Naive thymus-derived CD4-positive, alpha-beta T cell (primary cell): ENCODE measurements at regions of chr16 and their contacts with region 1.

Region 1: GRCh38 chr16:30065143-30065850 is at the start of gene ALDOA:
- DNase-seq: peak; percentile 82 to 97 (median 92)
- ATAC-seq: peak; percentile 90
- H3K4me3 ChIP-seq: peak within 1 kb of the TSS; percentile 94
- H3K4me3 Mint-ChIP-seq: peak within 1 kb of the TSS; percentile 96 to 100 (median 99)
- H3K27ac ChIP-seq: peak within 1 kb of the TSS; percentile 83
- H3K27ac Mint-ChIP-seq: peak within 1 kb of the TSS; percentile 90 to 99 (median 98)
- H3K4me1 ChIP-seq: peaks cover 13 to 37% of the 10 kb centered on the region in 2 donors
- H3K4me1 Mint-ChIP-seq: peaks cover 22 to 43% (median 35%) of the 10 kb centered on the region in 7 donors
- H3K27me3 ChIP-seq: no peaks in the 10 kb centered on the region
- H3K27me3 Mint-ChIP-seq: no peaks in the 10 kb centered on the region
- total RNA-seq, gene ALDOA: 356 to 1,619 (median 584) TPM

Region 2: DNA sequence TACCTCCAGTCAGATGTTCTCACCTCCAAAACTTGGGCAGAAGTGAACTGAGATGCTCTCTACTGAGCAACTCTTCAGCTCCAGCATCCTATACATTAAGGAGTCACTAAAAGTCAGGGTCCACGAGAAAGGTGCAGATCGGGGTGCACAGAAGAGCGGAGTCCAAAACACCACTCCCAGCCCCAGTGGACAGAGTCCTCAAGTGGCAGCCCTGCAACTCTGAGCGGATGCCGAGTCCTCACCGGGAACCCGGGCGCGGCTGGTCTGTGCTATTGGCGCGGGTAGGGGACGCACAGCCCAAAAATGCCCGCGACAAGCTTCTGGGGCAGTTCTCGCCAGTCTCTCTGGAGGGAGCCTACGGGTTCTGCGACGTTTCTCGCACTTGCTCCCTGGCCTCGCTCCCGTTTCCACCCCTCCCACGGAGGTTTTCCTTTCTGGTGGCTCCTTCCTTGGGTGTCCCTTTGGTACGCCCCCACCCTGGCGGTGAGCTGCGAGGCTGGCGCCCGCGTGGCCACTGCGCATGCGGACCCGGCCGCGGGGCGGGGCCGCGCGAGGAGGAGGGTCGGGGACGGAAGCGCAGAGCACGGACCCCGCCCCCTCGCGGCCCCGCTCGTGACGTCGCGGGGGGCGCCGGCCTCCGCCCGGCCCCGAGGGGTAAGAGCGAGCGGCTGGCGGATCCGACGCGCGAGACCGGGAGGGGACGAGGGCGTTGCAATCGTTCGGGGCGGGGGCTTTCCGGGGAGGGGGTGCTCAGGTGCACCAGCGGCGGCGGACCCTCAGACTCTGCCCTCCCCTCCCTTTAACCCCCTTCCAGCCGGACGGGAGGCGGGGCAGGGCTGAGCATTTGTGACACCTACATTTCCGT is 103.6 kb before region 1 on chr16 and contains the start of gene TMEM219:
- CTCF ChIA-PET with region 1: no interaction called
- POLR2A ChIA-PET with region 1: interaction called, 3 read pairs
- intact Hi-C with region 1: loop called in 1 of 2 experiments (anchors 2 kb)
- DNase-seq: peak; percentile 90 to 99 (median 96)
- ATAC-seq: peak; percentile 94
- H3K4me3 ChIP-seq: peak within 1 kb of the TSS; percentile 91
- H3K4me3 Mint-ChIP-seq: peak within 1 kb of the TSS; percentile 88 to 94 (median 92)
- H3K27ac ChIP-seq: peak within 1 kb of the TSS; percentile 85
- H3K27ac Mint-ChIP-seq: peak within 1 kb of the TSS; percentile 88 to 97 (median 95)
- H3K4me1 ChIP-seq: peaks cover 10 to 17% of the 10 kb centered on the region in 2 donors
- H3K4me1 Mint-ChIP-seq: peaks cover 8 to 31% (median 23%) of the 10 kb centered on the region in 7 donors
- H3K27me3 ChIP-seq: no peaks in the 10 kb centered on the region
- H3K27me3 Mint-ChIP-seq: no peaks in the 10 kb centered on the region
- total RNA-seq, gene TMEM219: 64.3 to 89.7 (median 74.0) TPM

Region 3: DNA sequence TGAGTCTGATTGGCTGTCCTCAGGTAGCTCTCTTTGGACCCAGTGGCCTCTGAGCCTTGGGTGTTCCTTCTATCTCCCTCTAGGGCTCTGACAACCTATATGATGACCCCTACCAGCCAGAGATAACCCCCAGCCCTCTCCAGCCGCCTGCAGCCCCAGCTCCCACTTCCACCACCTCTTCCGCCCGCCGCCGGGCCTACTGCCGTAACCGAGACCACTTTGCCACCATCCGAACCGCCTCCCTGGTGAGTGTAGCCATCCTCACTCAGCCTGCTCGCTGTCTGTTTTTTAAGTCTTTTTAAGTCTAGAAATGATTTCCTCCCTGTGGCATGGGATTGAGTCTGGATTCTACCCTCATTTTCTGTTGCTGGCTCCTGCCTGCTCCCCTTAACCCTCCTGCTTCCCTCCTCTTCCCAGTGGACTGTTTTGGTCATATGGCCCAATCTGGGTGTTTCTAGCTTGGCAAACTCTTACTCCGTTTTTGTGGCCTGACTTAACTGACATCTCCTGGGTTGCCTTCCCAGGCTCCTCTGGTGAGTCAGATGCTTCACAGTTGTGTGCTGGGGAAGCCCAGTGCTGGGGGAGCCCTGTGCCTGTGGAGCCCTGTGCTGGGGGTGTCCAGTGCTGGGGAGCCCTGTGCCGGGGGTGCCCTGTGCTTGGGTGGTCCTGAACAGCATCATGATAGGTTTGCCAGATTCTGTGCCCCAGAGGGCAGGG is 81.7 kb before region 1 on chr16:
- CTCF ChIA-PET with region 1: no interaction called
- POLR2A ChIA-PET with region 1: no interaction called
- intact Hi-C with region 1: no loop called
- DNase-seq: no peak
- ATAC-seq: no peak
- H3K4me3 ChIP-seq: no peak overlapping the region
- H3K4me3 Mint-ChIP-seq: no peak overlapping the region
- H3K27ac ChIP-seq: no peak overlapping the region
- H3K27ac Mint-ChIP-seq: peak overlapping the region in 2 of 9 donors; percentile 33 to 61
- H3K4me1 ChIP-seq: no peaks in the 10 kb centered on the region
- H3K4me1 Mint-ChIP-seq: peaks cover 0 to 4% (median 0%) of the 10 kb centered on the region in 7 donors
- H3K27me3 ChIP-seq: no peaks in the 10 kb centered on the region
- H3K27me3 Mint-ChIP-seq: no peaks in the 10 kb centered on the region

Region 4: GRCh38 chr16:30075507-30076275 is 10.4 kb after region 1 on chr16 and contains the start of gene PPP4C:
- CTCF ChIA-PET with region 1: interaction called, 3 read pairs
- POLR2A ChIA-PET with region 1: interaction called, 83 read pairs
- intact Hi-C with region 1: loop called (anchors 1 kb)
- DNase-seq: peak; percentile 82 to 92 (median 89)
- ATAC-seq: peak; percentile 94
- H3K4me3 ChIP-seq: peak within 1 kb of the TSS; percentile 75
- H3K4me3 Mint-ChIP-seq: peak within 1 kb of the TSS; percentile 90 to 99 (median 95)
- H3K27ac ChIP-seq: peak within 1 kb of the TSS; percentile 85
- H3K27ac Mint-ChIP-seq: peak within 1 kb of the TSS; percentile 92 to 98 (median 96)
- H3K4me1 ChIP-seq: peaks cover 20 to 21% of the 10 kb centered on the region in 2 donors
- H3K4me1 Mint-ChIP-seq: peaks cover 23 to 59% (median 41%) of the 10 kb centered on the region in 7 donors
- H3K27me3 ChIP-seq: no peaks in the 10 kb centered on the region
- H3K27me3 Mint-ChIP-seq: peaks cover 0 to 2% (median 0%) of the 10 kb centered on the region in 5 donors
- total RNA-seq, gene PPP4C: 68.4 to 143 (median 86.0) TPM

Region 5: GRCh38 chr16:30122604-30123160 is 57.4 kb after region 1 on chr16:
- CTCF ChIA-PET with region 1: no interaction called
- POLR2A ChIA-PET with region 1: interaction called, 3 read pairs
- intact Hi-C with region 1: loop called (anchors 2 kb)
- DNase-seq: peak in 2 of 9 donors; percentile 19 to 35
- ATAC-seq: peak; percentile 2
- H3K4me3 ChIP-seq: peak overlapping the region; percentile 68
- H3K4me3 Mint-ChIP-seq: peak overlapping the region; percentile 82 to 94 (median 88)
- H3K27ac ChIP-seq: peak overlapping the region; percentile 89
- H3K27ac Mint-ChIP-seq: peak overlapping the region; percentile 75 to 93 (median 85)
- H3K4me1 ChIP-seq: peaks cover 6 to 13% of the 10 kb centered on the region in 2 donors
- H3K4me1 Mint-ChIP-seq: peaks cover 20 to 39% (median 27%) of the 10 kb centered on the region in 7 donors
- H3K27me3 ChIP-seq: no peaks in the 10 kb centered on the region
- H3K27me3 Mint-ChIP-seq: no peaks in the 10 kb centered on the region

Region 6: GRCh38 chr16:30355144-30355894 is 290.0 kb after region 1 on chr16 and contains the start of gene CD2BP2:
- CTCF ChIA-PET with region 1: no interaction called
- POLR2A ChIA-PET with region 1: interaction called, 12 read pairs
- intact Hi-C with region 1: no loop called
- DNase-seq: peak; percentile 75 to 91 (median 86)
- ATAC-seq: peak; percentile 92
- H3K4me3 ChIP-seq: peak within 1 kb of the TSS; percentile 82
- H3K4me3 Mint-ChIP-seq: peak within 1 kb of the TSS; percentile 90 to 100 (median 96)
- H3K27ac ChIP-seq: peak within 1 kb of the TSS; percentile 92
- H3K27ac Mint-ChIP-seq: peak within 1 kb of the TSS; percentile 95 to 99 (median 98)
- H3K4me1 ChIP-seq: peaks cover 16 to 18% of the 10 kb centered on the region in 2 donors
- H3K4me1 Mint-ChIP-seq: peaks cover 10 to 46% (median 28%) of the 10 kb centered on the region in 7 donors
- H3K27me3 ChIP-seq: no peaks in the 10 kb centered on the region
- H3K27me3 Mint-ChIP-seq: peaks cover 0 to 2% (median 0%) of the 10 kb centered on the region in 5 donors
- total RNA-seq, gene CD2BP2: 37.5 to 77.0 (median 64.6) TPM

Region 7: GRCh38 chr16:30407102-30407803 is 342.0 kb after region 1 on chr16 and contains the start of gene ZNF771:
- CTCF ChIA-PET with region 1: interaction called, 4 read pairs
- POLR2A ChIA-PET with region 1: interaction called, 8 read pairs
- intact Hi-C with region 1: loop called (anchors 1 to 10 kb)
- DNase-seq: peak; percentile 66 to 93 (median 69)
- ATAC-seq: peak; percentile 93
- H3K4me3 ChIP-seq: peak within 1 kb of the TSS; percentile 85
- H3K4me3 Mint-ChIP-seq: peak within 1 kb of the TSS; percentile 87 to 100 (median 97)
- H3K27ac ChIP-seq: peak within 1 kb of the TSS; percentile 74
- H3K27ac Mint-ChIP-seq: peak within 1 kb of the TSS; percentile 83 to 97 (median 95)
- H3K4me1 ChIP-seq: peaks cover 0 to 12% of the 10 kb centered on the region in 2 donors
- H3K4me1 Mint-ChIP-seq: peaks cover 21 to 31% (median 27%) of the 10 kb centered on the region in 7 donors
- H3K27me3 ChIP-seq: no peaks in the 10 kb centered on the region
- H3K27me3 Mint-ChIP-seq: peaks cover 0 to 4% (median 0%) of the 10 kb centered on the region in 5 donors
- total RNA-seq, gene ZNF771: 1.2 to 9.0 (median 4.5) TPM